AG04450 (cell line): ENCODE measurements at regions of chr17 and their contacts with region 1.

Region 1: GRCh38 chr17:79393358-79394202 is 217.3 kb downstream of the RBFOX3 start:
- DNase-seq: peak; percentile 6
- H3K4me3 ChIP-seq: no peak overlapping the region
- H3K27ac ChIP-seq: no peak overlapping the region
- H3K27me3 ChIP-seq: peaks cover 20% of the 10 kb centered on the region
- CTCF ChIP-seq: peak; percentile 84

Region 2: DNA sequence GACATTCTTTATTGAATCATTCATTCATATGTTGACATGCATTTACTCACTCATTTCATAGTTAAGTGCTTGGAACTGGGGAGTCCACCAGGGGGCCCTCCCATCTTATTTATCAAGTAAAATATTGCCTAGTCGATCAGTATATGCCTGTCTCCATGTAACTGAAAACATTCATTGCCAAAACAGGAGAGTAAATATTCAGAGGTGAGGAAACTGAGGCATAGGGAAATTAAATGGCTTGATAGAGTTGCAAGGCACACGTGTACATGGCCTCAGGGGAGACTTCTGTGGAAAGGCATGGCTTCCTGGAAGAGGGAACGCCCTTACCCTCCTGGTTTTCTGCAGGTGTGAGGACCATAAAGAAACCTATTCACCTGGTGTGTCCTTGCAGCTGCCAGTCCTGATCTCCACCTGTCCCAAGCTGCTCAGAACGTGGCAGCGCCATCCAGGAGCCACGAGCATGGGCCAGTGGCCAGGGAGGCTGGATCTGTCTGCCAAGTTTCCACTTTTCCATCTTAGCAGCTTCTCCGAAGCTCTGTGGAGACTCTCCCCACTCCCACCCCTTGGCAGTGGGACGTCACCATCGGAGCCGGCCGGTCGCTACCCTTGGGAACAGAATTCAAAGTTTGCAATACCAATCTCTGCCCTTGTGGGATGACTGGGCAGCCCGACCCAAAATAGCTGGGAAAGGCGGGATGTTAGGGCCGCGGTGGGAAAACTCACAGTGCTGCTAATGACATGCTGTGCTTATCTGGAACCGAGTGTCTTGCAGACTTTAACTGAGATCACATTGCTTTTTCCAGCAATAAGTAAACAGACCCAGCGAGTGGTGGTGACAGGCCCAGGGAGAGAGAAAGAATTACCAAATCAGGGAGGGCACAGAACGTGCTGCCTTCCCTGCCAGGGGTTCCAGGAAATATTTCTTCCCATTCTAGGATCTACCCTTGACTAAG is 373.7 kb before region 1 on chr17:
- CTCF ChIA-PET with region 1: interaction called, 31 read pairs
- POLR2A ChIA-PET with region 1: no interaction called
- DNase-seq: peak; percentile 56
- H3K4me3 ChIP-seq: 0 out of 2 replicates have a peak overlapping the region, but pooled peaks have one; percentile 0
- H3K27ac ChIP-seq: no peak overlapping the region
- H3K27me3 ChIP-seq: peaks cover 3% of the 10 kb centered on the region
- CTCF ChIP-seq: peak; percentile 80

Region 3: DNA sequence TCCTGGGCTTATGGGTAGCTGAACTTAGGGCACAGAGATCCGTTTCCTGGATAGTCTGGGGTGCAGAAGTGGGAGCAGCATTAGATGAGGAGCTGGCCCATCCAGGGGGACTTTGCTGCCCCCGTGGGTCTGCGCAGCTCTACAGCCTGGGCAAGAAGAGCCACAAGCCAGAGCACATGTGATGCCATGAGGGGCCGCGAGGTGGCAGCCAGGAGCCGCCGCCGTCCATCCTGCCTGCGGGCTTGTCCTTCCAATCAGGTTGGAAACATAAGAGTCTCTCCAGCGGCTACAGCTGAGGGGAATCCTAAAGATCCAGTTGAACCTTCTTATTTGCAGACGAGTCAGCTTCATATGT is 347.8 kb before region 1 on chr17:
- CTCF ChIA-PET with region 1: interaction called, 36 read pairs
- POLR2A ChIA-PET with region 1: no interaction called
- DNase-seq: no peak
- H3K4me3 ChIP-seq: no peak overlapping the region
- H3K27ac ChIP-seq: no peak overlapping the region
- H3K27me3 ChIP-seq: no peaks in the 10 kb centered on the region
- CTCF ChIP-seq: peak; percentile 97

Region 4: GRCh38 chr17:79087428-79088143 is 306.0 kb before region 1 on chr17:
- CTCF ChIA-PET with region 1: interaction called, 221 read pairs
- POLR2A ChIA-PET with region 1: no interaction called
- DNase-seq: no peak
- H3K4me3 ChIP-seq: no peak overlapping the region
- H3K27ac ChIP-seq: no peak overlapping the region
- H3K27me3 ChIP-seq: peaks cover 2% of the 10 kb centered on the region
- CTCF ChIP-seq: peak; percentile 88

Region 5: DNA sequence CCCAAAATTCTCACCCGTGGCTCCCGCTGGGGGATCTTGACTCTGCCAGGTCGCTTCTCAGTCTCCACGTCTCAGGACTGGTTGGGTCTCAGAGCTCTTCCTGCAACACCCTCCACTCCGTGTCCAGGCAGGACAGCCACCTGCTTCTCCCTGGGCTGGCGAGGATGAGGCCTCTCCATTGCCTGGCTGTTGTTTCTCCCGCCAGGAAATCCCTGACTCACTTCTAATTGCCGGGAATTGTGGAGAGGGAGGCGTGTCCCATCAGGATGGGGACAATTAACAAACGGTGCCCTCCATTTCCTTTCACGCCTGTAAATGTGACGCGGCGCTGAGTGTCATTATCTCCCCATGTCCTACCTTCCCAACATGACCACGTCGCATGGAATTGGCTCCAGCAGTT is 12.7 kb after region 1 on chr17:
- CTCF ChIA-PET with region 1: interaction called, 38 read pairs
- POLR2A ChIA-PET with region 1: no interaction called
- DNase-seq: no peak
- H3K4me3 ChIP-seq: no peak overlapping the region
- H3K27ac ChIP-seq: no peak overlapping the region
- H3K27me3 ChIP-seq: peaks cover 25% of the 10 kb centered on the region
- CTCF ChIP-seq: no peak

Region 6: DNA sequence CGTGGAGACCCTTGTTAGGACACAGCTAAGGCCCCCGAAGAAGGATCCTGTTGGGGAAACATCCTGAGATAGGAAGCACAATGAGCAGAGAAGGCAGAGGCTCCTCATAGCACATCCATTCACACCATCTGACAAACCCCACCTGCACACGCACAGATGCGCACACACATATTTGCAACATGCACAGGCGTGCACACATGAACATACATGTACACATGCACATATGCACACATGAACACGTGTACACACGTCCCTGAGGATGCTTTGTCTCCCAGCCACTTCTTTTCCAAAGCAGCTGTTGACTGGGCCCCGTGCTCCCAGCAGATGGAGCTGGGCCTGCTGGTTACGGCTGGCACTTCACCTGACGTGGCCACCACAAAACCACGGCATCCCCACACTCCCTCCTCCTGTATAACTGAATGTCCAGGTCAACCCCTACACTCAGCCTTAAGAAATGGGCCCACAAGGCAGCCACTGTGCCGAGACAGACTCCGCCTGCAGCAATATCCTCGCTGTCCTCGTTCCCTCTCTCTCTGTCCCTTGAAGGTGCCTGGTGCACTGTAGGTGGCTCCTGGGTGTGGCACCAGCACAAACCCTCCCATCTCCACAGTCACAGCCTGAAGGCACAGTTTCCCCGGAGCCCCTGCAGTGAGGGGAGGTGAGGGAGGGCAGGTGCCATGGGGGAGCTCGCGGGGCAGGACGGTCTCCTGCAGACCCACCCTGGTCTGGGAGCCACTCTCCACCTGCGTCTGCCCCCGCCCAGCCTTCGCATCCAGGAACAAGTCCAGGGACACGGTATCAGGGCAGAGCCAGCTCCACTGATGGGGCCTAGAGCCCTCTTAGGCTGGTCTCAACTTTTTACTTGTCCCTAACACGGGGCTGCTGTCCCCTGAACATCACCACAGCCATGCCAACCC is 34.3 kb after region 1 on chr17:
- CTCF ChIA-PET with region 1: no interaction called
- POLR2A ChIA-PET with region 1: no interaction called
- DNase-seq: no peak
- H3K4me3 ChIP-seq: no peak overlapping the region
- H3K27ac ChIP-seq: no peak overlapping the region
- H3K27me3 ChIP-seq: no peaks in the 10 kb centered on the region
- CTCF ChIP-seq: no peak

Region 7: GRCh38 chr17:79796763-79797491 is 403.3 kb after region 1 on chr17 and contains the start of gene CBX8:
- CTCF ChIA-PET with region 1: no interaction called
- POLR2A ChIA-PET with region 1: no interaction called
- DNase-seq: peak; percentile 99
- H3K4me3 ChIP-seq: peak within 1 kb of the TSS; percentile 85
- H3K27ac ChIP-seq: peak within 1 kb of the TSS; percentile 83
- H3K27me3 ChIP-seq: peaks cover 44% of the 10 kb centered on the region
- CTCF ChIP-seq: no peak
- polyA plus RNA-seq, gene CBX8: 0.37 and 1.5 TPM in 2 replicates